CD8-positive, alpha-beta T cell (primary cell): ENCODE measurements at regions of chr4 and their contacts with region 1.

Region 1: DNA sequence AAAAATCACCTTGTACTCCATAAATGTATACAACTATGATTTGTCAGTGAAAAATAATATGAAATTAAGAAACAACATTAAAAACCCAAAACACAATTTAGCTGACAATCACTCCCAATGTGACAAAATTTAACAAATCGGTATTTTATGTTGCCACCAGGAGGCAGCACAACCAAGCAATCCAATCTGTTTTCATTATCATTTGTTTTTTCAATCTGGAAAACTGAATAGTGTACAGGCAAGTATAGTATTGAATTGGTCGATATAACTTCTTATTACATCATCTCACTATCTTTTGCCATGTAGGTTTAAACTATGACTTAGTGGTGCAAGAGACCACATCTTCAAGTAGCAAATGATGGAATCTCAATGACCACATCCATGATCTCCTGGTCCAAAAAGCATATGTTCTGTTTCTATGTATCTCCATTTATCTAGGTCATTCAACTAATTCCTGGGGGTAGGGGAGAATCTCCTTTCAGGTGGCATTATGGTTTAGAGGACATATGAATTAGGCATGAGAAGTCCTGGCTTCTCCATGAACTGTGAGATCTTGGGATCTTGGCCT is 112.9 kb upstream of the AGA start:
- DNase-seq: peak in 1 of 9 experiments; percentile 13
- ATAC-seq: no peak
- H3K4me3 ChIP-seq: no peak overlapping the region
- H3K4me3 Mint-ChIP-seq: no peak overlapping the region
- H3K27ac ChIP-seq: no peak overlapping the region
- H3K27ac Mint-ChIP-seq: no peak overlapping the region
- H3K4me1 ChIP-seq: no peaks in the 10 kb centered on the region
- H3K4me1 Mint-ChIP-seq: no peaks in the 10 kb centered on the region
- H3K27me3 ChIP-seq: no peaks in the 10 kb centered on the region
- H3K27me3 Mint-ChIP-seq: no peaks in the 10 kb centered on the region
- CTCF ChIP-seq: peak; percentile 61

Region 2: DNA sequence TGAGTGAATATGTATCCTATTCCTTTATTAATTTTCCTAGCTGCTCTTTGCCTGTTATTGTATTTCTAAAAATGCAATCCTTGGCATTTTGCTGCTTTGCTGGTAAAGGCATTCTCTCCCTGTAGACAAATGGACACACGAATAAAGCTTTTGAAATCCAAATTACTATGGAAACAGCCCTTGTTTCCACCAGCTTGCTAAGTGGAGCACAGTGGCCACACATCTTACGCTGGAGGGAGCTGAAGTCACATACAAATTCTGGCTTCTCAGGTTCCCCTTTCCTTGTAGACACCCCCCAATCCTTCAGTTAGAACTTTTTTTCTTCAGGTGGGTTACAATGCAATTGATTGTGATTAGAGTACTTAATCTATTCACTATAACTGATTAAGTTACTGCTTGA is 179.1 kb before region 1 on chr4:
- CTCF ChIA-PET with region 1: no interaction called
- POLR2A ChIA-PET with region 1: no interaction called
- intact Hi-C with region 1: loop called in 1 of 2 experiments (anchors 10 kb)
- DNase-seq: peak in 1 of 9 experiments; percentile 11
- ATAC-seq: no peak
- H3K4me3 ChIP-seq: no peak overlapping the region
- H3K4me3 Mint-ChIP-seq: no peak overlapping the region
- H3K27ac ChIP-seq: no peak overlapping the region
- H3K27ac Mint-ChIP-seq: no peak overlapping the region
- H3K4me1 ChIP-seq: no peaks in the 10 kb centered on the region
- H3K4me1 Mint-ChIP-seq: no peaks in the 10 kb centered on the region
- H3K27me3 ChIP-seq: no peaks in the 10 kb centered on the region
- H3K27me3 Mint-ChIP-seq: no peaks in the 10 kb centered on the region
- CTCF ChIP-seq: no peak